Prostate gland (tissue), 2 donors: ENCODE measurements at regions of chr13 and their contacts with region 1.

Region 1: DNA sequence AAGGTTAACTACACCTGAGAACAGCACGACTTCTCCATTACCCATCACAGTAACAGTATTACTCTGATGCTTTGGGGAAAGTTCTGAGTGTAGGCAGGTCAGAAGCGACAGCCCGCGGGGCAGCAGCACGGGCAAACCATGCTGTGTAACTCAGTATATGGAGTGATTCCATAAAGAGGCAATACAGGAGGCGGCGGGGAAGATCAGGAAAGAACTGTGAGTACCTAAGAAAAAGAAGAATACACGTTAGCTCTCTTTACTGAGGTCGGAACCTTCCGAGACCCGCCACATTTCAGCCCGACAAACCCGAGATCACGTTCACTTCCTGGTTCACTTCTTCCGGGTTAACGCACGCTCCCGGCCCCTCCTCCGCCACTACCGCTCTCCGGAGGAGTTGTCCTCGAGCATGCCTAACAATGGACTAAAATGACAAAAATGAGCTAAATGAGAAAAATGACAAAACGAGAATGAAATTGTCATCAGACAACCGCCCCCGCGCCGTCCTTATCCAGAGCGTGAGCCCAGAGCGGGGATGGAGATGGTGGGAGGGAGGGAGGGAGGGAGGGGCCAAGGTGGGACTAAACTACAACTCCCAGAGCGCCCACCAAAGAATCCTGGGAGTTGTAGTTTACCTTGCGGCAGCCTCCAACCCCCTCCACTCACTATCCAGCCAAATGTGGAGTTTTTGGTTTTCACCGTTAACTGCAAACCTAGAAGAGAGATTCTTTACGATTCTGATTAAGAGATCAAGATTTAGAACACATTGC is at the start of gene MTRF1:
- DNase-seq: peak; percentile 76
- H3K4me3 ChIP-seq: peak within 1 kb of the TSS; percentile 56 to 58
- H3K27ac ChIP-seq: peak within 1 kb of the TSS; percentile 84 to 86
- H3K4me1 ChIP-seq: no peaks in the 10 kb centered on the region
- H3K27me3 ChIP-seq: no peaks in the 10 kb centered on the region
- CTCF ChIP-seq: no peak
- POLR2A ChIP-seq: no peak
- total RNA-seq, gene MTRF1: 10.8 to 22.2 TPM

Region 2: GRCh38 chr13:41107584-41108014 is 155.8 kb before region 1 on chr13:
- intact Hi-C with region 1: no loop called
- DNase-seq: no peak
- H3K4me3 ChIP-seq: no peak overlapping the region
- H3K27ac ChIP-seq: no peak overlapping the region
- H3K4me1 ChIP-seq: no peaks in the 10 kb centered on the region
- H3K27me3 ChIP-seq: no peaks in the 10 kb centered on the region
- CTCF ChIP-seq: no peak
- POLR2A ChIP-seq: no peak

Region 3: DNA sequence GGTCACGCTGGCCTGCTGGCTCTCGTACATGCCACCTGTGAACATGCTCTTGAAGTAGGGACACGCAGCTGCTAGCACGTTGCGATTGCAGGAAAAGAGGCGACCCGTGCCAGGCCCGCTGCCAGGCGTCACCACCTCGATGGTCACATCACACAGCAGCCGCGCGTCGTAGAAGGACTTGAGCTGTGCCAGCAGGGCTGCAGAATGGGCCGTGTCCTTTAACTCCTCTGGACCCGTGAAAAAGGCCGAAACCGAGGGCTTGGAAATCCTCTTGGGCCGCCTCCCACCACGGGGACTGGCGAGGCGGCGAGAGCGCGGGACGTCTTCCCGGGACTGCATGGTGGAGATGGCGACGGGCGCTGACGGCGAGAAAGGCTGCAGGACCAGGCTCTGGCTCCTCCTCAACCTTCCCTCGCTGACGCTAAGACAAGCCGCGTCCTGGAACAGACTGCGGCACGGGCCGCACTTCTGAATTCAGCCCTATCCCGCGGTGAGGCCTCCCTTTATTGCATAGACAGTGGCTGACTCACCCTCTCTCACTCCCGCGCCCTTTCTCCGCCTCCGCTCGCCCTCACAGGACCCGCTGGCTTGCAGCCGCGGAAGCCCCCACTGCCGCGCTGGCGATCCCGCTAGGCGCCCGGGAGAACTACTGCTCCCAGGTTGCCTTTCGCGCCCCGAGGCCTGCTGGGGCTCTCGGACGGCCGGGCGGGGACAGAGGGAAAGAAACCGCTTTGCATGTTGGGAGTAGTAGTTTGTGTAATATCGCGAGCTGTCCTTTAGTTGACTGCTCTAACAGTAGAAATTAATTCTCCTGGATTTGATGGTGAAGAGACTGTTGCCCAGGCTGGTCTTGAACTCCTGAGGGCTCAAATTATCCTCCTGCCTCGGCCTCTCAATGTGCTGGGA is 69.3 kb before region 1 on chr13 and contains the start of gene KBTBD7:
- intact Hi-C with region 1: loop called (anchors 10 kb)
- DNase-seq: peak; percentile 90
- H3K4me3 ChIP-seq: peak within 1 kb of the TSS; percentile 56 to 66
- H3K27ac ChIP-seq: peak within 1 kb of the TSS; percentile 81
- H3K4me1 ChIP-seq: peaks cover 2% of the 10 kb centered on the region
- H3K27me3 ChIP-seq: no peaks in the 10 kb centered on the region
- CTCF ChIP-seq: peak in 2 of 4 experiments; percentile 22 to 33
- POLR2A ChIP-seq: peak; percentile 50
- total RNA-seq, gene KBTBD7: 10.5 to 13.2 TPM

Region 4: GRCh38 chr13:41213311-41213710 is 50.1 kb before region 1 on chr13:
- intact Hi-C with region 1: no loop called
- DNase-seq: no peak
- H3K4me3 ChIP-seq: no peak overlapping the region
- H3K27ac ChIP-seq: no peak overlapping the region
- H3K4me1 ChIP-seq: no peaks in the 10 kb centered on the region
- H3K27me3 ChIP-seq: no peaks in the 10 kb centered on the region
- CTCF ChIP-seq: no peak
- POLR2A ChIP-seq: no peak